ENCODE measurements at regions of chr12 and their contacts with region 1.

Region 1: GRCh38 chr12:109695961-109696461 is 17.6 kb upstream of the FAM222A start:
- DNase-seq: no peak
- H3K4me3 ChIP-seq: no peak overlapping the region
- H3K27ac ChIP-seq: no peak overlapping the region
- H3K4me1 ChIP-seq: no peaks in the 10 kb centered on the region
- H3K27me3 ChIP-seq: no peaks in the 10 kb centered on the region
- CTCF ChIP-seq: no peak
- POLR2A ChIP-seq: no peak

Region 2: GRCh38 chr12:109612975-109613502 is 83.0 kb before region 1 on chr12:
- intact Hi-C with region 1: loop called in 1 of 2 experiments (anchors 10 kb)
- DNase-seq: no peak
- H3K4me3 ChIP-seq: no peak overlapping the region
- H3K27ac ChIP-seq: no peak overlapping the region
- H3K4me1 ChIP-seq: no peaks in the 10 kb centered on the region
- H3K27me3 ChIP-seq: no peaks in the 10 kb centered on the region
- CTCF ChIP-seq: peak in 2 of 6 experiments; percentile 4 to 6
- POLR2A ChIP-seq: no peak

Region 3: GRCh38 chr12:110100315-110100970 is 404.4 kb after region 1 on chr12:
- intact Hi-C with region 1: no loop called
- DNase-seq: peak; percentile 47 to 91 (median 76)
- H3K4me3 ChIP-seq: no peak overlapping the region
- H3K27ac ChIP-seq: peak overlapping the region in 2 of 5 donors; percentile 20 to 35
- H3K4me1 ChIP-seq: peaks cover 0 to 18% of the 10 kb centered on the region in 2 donors
- H3K27me3 ChIP-seq: no peaks in the 10 kb centered on the region
- CTCF ChIP-seq: peak; percentile 84 to 97 (median 93)
- POLR2A ChIP-seq: no peak